Left colon (tissue), 2 donors: ENCODE measurements at regions of chr2 and their contacts with region 1.

Region 1: GRCh38 chr2:218466016-218466521 is 47.1 kb downstream of the VIL1 start:
- DNase-seq: no peak
- ATAC-seq: peak; percentile 78

Region 2: DNA sequence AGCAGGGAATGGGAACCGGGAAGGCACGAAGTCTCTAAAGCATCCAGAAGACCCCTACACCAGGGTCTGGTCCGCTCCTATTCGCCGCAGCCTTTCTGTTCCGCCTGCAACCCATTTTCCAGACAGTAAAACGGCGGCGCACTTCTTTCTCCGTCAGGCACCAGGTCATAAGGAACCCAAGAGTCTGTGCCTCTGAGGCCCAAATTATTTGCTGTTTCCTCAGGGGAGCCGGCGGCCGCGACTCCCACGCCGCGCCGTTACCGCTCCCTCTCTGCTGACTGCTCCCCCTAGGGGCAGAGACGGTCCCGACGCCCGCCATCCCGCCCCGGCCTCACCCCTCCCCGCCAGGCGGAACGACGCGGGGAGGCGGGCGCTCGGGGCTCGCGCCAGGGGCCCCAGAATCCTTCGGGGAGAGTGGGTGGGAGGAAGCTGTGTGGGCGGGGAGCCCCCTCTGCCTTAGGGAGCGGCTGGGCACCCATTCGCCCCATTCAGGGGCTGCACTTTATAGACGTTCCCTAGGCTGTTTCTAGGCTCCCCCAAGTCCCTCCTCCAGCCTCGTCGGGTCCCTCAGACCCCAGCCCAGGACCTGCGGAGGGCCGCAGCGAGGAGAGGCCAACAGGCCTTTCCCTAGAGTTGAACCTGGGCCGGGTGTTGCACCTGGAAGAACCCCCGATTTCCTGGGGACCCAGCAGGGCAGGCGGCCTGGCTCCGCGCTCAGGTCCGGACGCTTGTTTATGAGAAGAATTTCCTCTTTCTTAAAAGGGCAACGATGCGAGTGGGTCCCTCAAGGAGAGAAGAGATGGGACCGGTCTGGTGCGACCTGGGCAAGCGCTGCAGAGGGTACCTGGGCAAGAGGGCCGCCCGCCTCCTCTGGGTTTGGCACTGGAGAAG is 70.0 kb before region 1 on chr2:
- intact Hi-C with region 1: no loop called
- DNase-seq: peak; percentile 93 to 95
- ATAC-seq: peak; percentile 55

Region 3: DNA sequence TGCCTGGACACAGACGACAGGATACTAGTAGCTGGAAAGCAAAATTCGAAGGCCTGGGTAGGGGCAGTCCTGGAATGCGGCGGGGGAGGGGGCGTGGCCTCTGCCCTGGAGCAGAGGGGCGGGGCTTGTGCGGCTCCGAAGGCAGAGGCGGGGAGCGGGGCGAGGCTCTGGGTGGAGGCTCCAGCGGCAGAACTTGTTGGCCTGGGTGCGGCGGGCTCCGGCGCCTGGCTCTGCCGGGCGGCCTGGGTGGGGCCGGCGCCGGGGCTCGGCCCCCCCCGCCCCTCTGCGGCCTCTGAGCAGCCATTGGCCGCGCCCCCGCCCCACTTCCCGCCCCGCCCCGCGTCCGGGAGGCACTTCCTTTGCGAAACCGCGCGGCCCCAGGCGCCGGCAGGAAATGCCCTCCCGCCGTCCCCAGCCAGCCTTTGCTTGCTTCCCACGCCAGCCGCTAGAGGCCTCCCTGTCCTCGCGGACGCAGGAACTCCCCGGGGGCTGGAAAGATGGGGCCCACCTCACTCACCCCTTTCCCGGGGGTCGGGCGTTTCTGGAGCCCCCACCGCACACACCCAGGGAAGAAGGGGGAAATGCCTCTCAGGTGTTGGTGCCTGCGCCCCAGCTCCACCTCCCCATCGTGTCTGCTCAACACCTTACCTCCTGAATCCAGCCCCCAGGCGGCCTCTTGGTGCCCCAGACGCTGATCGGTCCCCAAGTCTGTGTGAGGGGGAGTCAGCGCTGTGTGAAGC is 59.7 kb before region 1 on chr2:
- intact Hi-C with region 1: loop called (anchors 5 to 10 kb)
- DNase-seq: peak; percentile 97 to 98
- ATAC-seq: peak; percentile 79

Region 4: DNA sequence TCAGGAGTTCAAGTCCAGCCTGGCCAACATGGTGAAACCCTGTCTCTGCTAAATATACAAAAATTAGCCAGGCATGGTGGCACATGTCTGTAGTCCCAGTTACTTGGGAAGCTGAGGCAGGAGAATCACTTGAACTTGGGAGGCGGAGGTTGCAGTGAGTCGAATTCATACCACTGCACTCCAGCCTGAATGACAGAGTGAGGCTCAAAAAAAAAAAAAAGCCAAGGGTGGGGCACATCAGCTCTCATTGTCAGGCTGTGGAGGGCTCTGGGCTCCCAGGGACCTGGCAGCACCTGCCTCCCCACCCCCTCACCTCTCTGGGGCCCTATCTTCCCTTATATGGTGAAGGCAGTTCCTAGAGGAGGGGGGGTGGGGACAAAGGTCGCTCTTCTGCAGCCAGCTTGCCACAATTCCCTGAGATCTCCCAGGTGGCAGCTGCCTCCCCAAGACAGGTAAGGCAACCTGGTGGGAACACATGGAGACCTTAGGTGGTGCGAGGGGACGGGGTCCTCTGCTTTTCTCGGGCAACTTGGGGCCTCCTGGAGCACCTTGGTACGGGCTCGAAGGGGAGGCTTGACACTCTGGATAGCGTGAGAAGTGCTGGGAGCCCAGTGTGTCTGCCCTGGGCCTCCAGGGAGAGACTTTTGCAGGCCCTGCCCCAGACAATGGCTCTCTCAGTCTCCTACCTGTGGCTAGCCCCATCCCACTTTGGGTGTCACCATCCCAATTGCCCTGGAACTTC is 47.2 kb before region 1 on chr2 and contains the start of gene VIL1:
- intact Hi-C with region 1: loop called in 1 of 2 experiments (anchors 10 kb)
- DNase-seq: peak; percentile 94 to 96
- ATAC-seq: peak; percentile 92
- total RNA-seq, gene VIL1: 441 to 488 TPM